GM12878 (cell line): ENCODE measurements at regions of chr9 and their contacts with region 1.

Region 1: GRCh38 chr9:106862825-106863720 is at the start of gene ZNF462:
- DNase-seq: no peak
- ATAC-seq: peak; percentile 42
- H3K4me3 ChIP-seq: no peak within 1 kb of the TSS
- H3K27ac ChIP-seq: no peak within 1 kb of the TSS
- H3K4me1 ChIP-seq: no peaks in the 10 kb centered on the region
- H3K27me3 ChIP-seq: peaks cover 6 to 19% of the 10 kb centered on the region in 2 experiments; a peak in 3 of 4 replicates
- CTCF ChIP-seq: peak in 1 of 3 experiments; percentile 44; a peak in 2 of 6 replicates
- EP300 ChIP-seq: no peak
- POLR2A ChIP-seq: no peak
- RAD21 ChIP-seq: peak; percentile 29; the same call in 1 of the 2 replicates
- polyA plus RNA-seq, gene ZNF462: 0.27 to 0.42 TPM

Region 2: GRCh38 chr9:106310782-106311181 is 552.3 kb before region 1 on chr9:
- CTCF ChIA-PET with region 1: interaction called, 3 read pairs
- POLR2A ChIA-PET with region 1: no interaction called
- RAD21 ChIA-PET with region 1: interaction called, 7 read pairs
- SMC1A ChIA-PET with region 1: interaction called, 5 read pairs
- in situ Hi-C with region 1: no loop called
- intact Hi-C with region 1: loop called (anchors 2 kb)
- DNase-seq: peak; percentile 31
- ATAC-seq: peak; percentile 72
- H3K4me3 ChIP-seq: no peak overlapping the region
- H3K27ac ChIP-seq: no peak overlapping the region
- H3K4me1 ChIP-seq: no peaks in the 10 kb centered on the region
- H3K27me3 ChIP-seq: no peaks in the 10 kb centered on the region
- CTCF ChIP-seq: no peak
- EP300 ChIP-seq: peak; percentile 62 to 72; a peak in 2 of 4 replicates
- POLR2A ChIP-seq: no peak
- RAD21 ChIP-seq: no peak

Region 3: DNA sequence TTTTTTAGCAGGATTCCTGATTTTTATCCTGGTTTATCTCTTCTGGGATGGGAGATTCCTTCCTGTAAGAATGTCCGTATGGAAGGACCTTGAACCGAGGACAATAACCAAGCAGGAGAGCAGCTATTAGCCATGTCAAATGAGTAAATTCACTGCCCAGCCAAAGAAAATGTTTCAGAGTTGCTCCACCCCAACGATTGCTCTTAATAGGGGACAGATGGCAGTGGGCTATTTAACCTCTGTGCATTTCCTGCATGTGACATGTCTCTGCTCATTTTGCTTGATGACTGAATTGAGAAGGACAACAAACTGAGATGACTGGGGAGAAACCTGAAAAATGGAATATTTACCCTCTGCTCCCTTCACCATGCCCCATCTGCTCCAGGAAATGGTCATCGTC is 480.0 kb before region 1 on chr9:
- CTCF ChIA-PET with region 1: no interaction called
- POLR2A ChIA-PET with region 1: no interaction called
- RAD21 ChIA-PET with region 1: no interaction called
- SMC1A ChIA-PET with region 1: no interaction called
- in situ Hi-C with region 1: no loop called
- intact Hi-C with region 1: no loop called
- DNase-seq: no peak
- ATAC-seq: no peak
- H3K4me3 ChIP-seq: no peak overlapping the region
- H3K27ac ChIP-seq: no peak overlapping the region
- H3K4me1 ChIP-seq: no peaks in the 10 kb centered on the region
- H3K27me3 ChIP-seq: no peaks in the 10 kb centered on the region
- CTCF ChIP-seq: no peak
- EP300 ChIP-seq: no peak
- POLR2A ChIP-seq: no peak
- RAD21 ChIP-seq: no peak

Region 4: GRCh38 chr9:106450549-106450948 is 412.5 kb before region 1 on chr9:
- CTCF ChIA-PET with region 1: no interaction called
- POLR2A ChIA-PET with region 1: no interaction called
- RAD21 ChIA-PET with region 1: no interaction called
- SMC1A ChIA-PET with region 1: no interaction called
- in situ Hi-C with region 1: no loop called
- intact Hi-C with region 1: no loop called
- DNase-seq: no peak
- ATAC-seq: peak; percentile 12
- H3K4me3 ChIP-seq: no peak overlapping the region
- H3K27ac ChIP-seq: no peak overlapping the region
- H3K4me1 ChIP-seq: no peaks in the 10 kb centered on the region
- H3K27me3 ChIP-seq: no peaks in the 10 kb centered on the region
- CTCF ChIP-seq: no peak
- EP300 ChIP-seq: no peak
- POLR2A ChIP-seq: no peak
- RAD21 ChIP-seq: no peak

Region 5: DNA sequence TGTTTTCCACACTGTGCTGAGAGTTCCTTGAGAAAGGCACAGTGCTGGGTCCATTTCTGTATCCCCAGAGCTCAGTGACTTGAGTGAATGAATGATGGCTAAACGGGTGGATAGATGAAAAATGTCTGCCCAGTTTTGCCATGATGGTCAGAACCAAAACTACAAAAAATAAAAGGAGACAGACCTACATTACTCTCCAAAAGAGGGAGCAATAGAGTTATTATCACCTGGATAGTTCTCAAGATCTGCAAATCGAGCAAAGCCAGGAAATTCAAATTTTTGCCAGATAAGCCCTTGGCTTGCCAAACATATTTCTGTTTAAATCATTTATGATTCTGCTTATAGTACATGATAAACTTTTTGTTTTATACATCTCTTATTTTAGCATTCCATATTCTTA is 214.3 kb before region 1 on chr9:
- CTCF ChIA-PET with region 1: no interaction called
- POLR2A ChIA-PET with region 1: no interaction called
- RAD21 ChIA-PET with region 1: no interaction called
- SMC1A ChIA-PET with region 1: no interaction called
- in situ Hi-C with region 1: no loop called
- intact Hi-C with region 1: loop called (anchors 5 kb)
- DNase-seq: no peak
- ATAC-seq: no peak
- H3K4me3 ChIP-seq: no peak overlapping the region
- H3K27ac ChIP-seq: no peak overlapping the region
- H3K4me1 ChIP-seq: no peaks in the 10 kb centered on the region
- H3K27me3 ChIP-seq: no peaks in the 10 kb centered on the region
- CTCF ChIP-seq: peak in 1 of 3 experiments; percentile 16; a peak in 1 of 6 replicates
- EP300 ChIP-seq: no peak
- POLR2A ChIP-seq: no peak
- RAD21 ChIP-seq: no peak

Region 6: GRCh38 chr9:106753155-106753671 is 109.9 kb before region 1 on chr9:
- CTCF ChIA-PET with region 1: interaction called, 8 read pairs
- POLR2A ChIA-PET with region 1: interaction called, 3 read pairs
- RAD21 ChIA-PET with region 1: interaction called, 7 read pairs
- SMC1A ChIA-PET with region 1: interaction called, 7 read pairs
- in situ Hi-C with region 1: no loop called
- intact Hi-C with region 1: loop called (anchors 2 kb)
- DNase-seq: peak; percentile 97
- ATAC-seq: peak; percentile 97
- H3K4me3 ChIP-seq: no peak overlapping the region
- H3K27ac ChIP-seq: peak overlapping the region; percentile 47
- H3K4me1 ChIP-seq: peaks cover 15% of the 10 kb centered on the region
- H3K27me3 ChIP-seq: no peaks in the 10 kb centered on the region
- CTCF ChIP-seq: no peak
- EP300 ChIP-seq: peak; percentile 95 to 96; a peak in 3 of 4 replicates
- POLR2A ChIP-seq: no peak
- RAD21 ChIP-seq: no peak

Region 7: DNA sequence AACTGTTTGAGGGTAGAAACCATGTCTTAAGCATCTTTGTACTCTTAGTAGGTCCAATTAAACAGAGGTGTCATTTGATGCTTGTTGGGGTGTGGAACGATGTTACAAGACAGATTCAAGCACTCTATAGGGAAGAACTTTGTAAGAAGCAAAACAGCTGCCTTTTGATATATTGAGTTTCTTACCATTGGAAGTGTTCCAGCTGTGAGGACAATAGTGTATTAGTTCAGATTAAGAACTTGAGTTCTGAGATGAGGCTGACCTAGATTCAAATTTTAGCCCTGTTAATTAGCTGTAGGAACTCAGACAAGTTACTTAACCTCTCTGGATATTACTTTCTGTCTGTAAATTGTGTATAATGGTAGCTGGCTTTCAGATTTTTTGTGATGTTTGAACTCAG is 19.7 kb before region 1 on chr9:
- CTCF ChIA-PET with region 1: no interaction called
- POLR2A ChIA-PET with region 1: no interaction called
- RAD21 ChIA-PET with region 1: no interaction called
- SMC1A ChIA-PET with region 1: no interaction called
- in situ Hi-C with region 1: no loop called
- intact Hi-C with region 1: no loop called
- DNase-seq: no peak
- ATAC-seq: no peak
- H3K4me3 ChIP-seq: no peak overlapping the region
- H3K27ac ChIP-seq: no peak overlapping the region
- H3K4me1 ChIP-seq: no peaks in the 10 kb centered on the region
- H3K27me3 ChIP-seq: peaks cover 0 to 2% of the 10 kb centered on the region in 2 experiments; a peak in 1 of 4 replicates
- CTCF ChIP-seq: no peak
- EP300 ChIP-seq: no peak
- POLR2A ChIP-seq: no peak
- RAD21 ChIP-seq: no peak

Region 8: DNA sequence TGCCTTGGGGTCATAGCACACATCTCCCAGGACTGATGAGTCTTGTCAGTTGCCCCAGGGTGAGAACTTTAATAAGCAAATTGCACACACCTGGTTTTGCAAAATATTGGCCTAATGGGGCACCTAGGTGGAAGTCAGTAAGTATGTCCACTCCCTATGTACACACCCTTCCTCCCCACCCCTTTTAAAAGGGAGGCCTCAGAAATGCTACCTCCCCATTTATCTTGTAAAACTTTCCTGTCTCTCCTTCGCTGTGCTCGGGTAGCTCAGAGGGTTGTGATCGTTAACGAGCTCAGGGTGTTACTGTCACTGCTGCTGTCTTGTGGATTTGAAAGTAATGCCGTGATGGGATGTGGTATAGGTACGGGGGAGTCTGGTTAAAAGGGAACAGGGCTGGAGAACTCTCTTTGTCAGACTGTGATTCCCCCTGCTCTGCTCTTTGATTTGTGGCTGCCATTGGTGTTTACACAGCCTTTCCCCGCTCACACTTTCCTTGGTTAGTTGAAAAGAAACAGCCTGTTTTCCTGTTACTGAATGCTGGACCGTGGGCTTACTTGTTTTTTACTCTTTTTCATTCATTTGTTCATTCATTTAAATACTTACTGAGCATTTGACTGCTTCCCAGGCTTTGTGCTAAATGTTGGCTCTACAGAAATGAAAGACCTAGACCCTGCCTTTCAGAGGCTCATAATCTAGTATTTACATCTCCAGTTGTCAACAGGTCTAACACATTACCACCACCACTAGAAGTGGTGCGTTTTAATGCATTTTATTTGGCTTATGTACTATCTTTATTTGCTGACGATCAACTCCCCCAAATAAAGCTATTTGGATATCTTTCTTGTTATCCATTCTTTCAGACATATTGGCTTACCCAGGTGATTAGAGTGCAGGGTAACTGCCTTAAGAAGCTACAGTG is 26.2 kb after region 1 on chr9:
- CTCF ChIA-PET with region 1: no interaction called
- POLR2A ChIA-PET with region 1: no interaction called
- RAD21 ChIA-PET with region 1: interaction called, 20 read pairs
- SMC1A ChIA-PET with region 1: interaction called, 219 read pairs
- in situ Hi-C with region 1: no loop called
- intact Hi-C with region 1: no loop called
- DNase-seq: no peak
- ATAC-seq: peak; percentile 66
- H3K4me3 ChIP-seq: no peak overlapping the region
- H3K27ac ChIP-seq: no peak overlapping the region
- H3K4me1 ChIP-seq: no peaks in the 10 kb centered on the region
- H3K27me3 ChIP-seq: no peaks in the 10 kb centered on the region
- CTCF ChIP-seq: no peak
- EP300 ChIP-seq: no peak
- POLR2A ChIP-seq: no peak
- RAD21 ChIP-seq: no peak

Region 9: GRCh38 chr9:106921341-106921899 is 58.3 kb after region 1 on chr9:
- CTCF ChIA-PET with region 1: interaction called, 15 read pairs
- POLR2A ChIA-PET with region 1: interaction called, 6 read pairs
- RAD21 ChIA-PET with region 1: interaction called, 21 read pairs
- SMC1A ChIA-PET with region 1: interaction called, 100 read pairs
- in situ Hi-C with region 1: no loop called
- intact Hi-C with region 1: loop called (anchors 2 kb)
- DNase-seq: no peak
- ATAC-seq: peak; percentile 91
- H3K4me3 ChIP-seq: no peak overlapping the region
- H3K27ac ChIP-seq: no peak overlapping the region
- H3K4me1 ChIP-seq: no peaks in the 10 kb centered on the region
- H3K27me3 ChIP-seq: no peaks in the 10 kb centered on the region
- CTCF ChIP-seq: no peak
- EP300 ChIP-seq: peak in 1 of 2 experiments; percentile 39; a peak in 2 of 4 replicates
- POLR2A ChIP-seq: no peak
- RAD21 ChIP-seq: no peak

Region 10: GRCh38 chr9:107029146-107029545 is 166.1 kb after region 1 on chr9:
- CTCF ChIA-PET with region 1: no interaction called
- POLR2A ChIA-PET with region 1: no interaction called
- RAD21 ChIA-PET with region 1: no interaction called
- SMC1A ChIA-PET with region 1: no interaction called
- in situ Hi-C with region 1: no loop called
- intact Hi-C with region 1: no loop called
- DNase-seq: no peak
- ATAC-seq: no peak
- H3K4me3 ChIP-seq: no peak overlapping the region
- H3K27ac ChIP-seq: no peak overlapping the region
- H3K4me1 ChIP-seq: peaks cover 2% of the 10 kb centered on the region; the same call in 1 of the 2 replicates
- H3K27me3 ChIP-seq: no peaks in the 10 kb centered on the region
- CTCF ChIP-seq: no peak
- EP300 ChIP-seq: no peak
- POLR2A ChIP-seq: no peak
- RAD21 ChIP-seq: no peak

Region 11: DNA sequence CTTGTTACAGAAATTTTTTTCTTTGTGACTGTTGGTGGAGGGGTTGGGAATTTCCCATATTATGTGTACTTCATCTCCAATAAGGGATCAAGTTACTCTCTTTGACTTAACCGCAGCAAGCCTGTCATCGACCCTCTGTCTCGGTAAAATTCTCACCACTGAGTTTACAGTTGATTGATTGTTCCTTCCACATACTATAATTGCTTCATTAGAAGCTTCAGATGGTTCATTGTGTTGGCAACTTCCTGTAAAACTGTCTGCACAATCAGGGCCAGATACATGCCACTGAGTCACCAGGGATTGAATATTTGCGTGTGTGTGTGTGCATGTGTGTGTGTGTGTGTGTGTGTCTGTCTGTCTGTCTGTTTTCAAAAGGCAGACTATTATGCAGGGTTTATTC is 176.5 kb after region 1 on chr9:
- CTCF ChIA-PET with region 1: interaction called, 7 read pairs
- POLR2A ChIA-PET with region 1: no interaction called
- RAD21 ChIA-PET with region 1: interaction called, 13 read pairs
- SMC1A ChIA-PET with region 1: interaction called, 9 read pairs
- in situ Hi-C with region 1: no loop called
- intact Hi-C with region 1: loop called (anchors 5 kb)
- DNase-seq: peak; percentile 74
- ATAC-seq: peak; percentile 69
- H3K4me3 ChIP-seq: no peak overlapping the region
- H3K27ac ChIP-seq: no peak overlapping the region
- H3K4me1 ChIP-seq: no peaks in the 10 kb centered on the region
- H3K27me3 ChIP-seq: no peaks in the 10 kb centered on the region
- CTCF ChIP-seq: no peak
- EP300 ChIP-seq: peak in 1 of 2 experiments; percentile 62; a peak in 1 of 4 replicates
- POLR2A ChIP-seq: no peak
- RAD21 ChIP-seq: no peak